ENCODE measurements at regions of chr13 and their contacts with region 1.

Region 1: DNA sequence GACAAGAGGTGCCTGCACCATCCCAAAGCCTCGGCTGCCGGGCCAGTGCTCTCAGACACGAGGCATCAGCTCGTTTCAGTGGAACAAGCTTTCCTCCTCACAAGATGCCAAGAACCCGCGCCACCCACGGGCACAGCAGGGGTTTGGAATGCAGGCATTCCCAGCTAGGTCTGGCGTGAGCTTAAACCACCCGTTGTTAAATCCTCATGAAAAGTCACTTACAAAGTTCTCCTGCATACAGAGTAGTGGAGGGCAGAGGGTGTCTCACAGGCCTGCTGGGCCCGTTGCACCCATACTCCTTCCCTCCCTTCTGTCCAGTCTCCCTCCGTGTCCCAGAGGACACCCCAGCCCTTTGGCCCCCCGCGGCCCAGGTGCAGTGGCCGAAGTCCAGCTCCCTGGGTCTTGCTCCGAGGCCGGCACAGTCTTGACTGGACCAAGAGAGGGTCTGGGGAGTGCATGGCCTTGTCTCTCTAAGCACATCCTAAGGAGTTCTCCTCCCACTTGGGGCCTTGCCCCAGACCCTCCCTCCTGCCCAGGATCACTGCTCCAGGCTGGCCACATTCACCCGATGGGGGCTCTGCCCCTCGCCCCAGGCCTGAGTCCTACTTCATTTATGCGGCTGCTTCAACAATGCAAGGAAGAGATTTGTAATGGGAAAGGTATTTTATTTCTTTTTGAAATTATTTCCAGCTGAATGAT is 35.2 kb upstream of the GRTP1 start:
- DNase-seq: peak in 1 of 2 donors; percentile 84
- ATAC-seq: no peak
- H3K4me3 ChIP-seq: no peak overlapping the region
- H3K27ac ChIP-seq: peak overlapping the region in 1 of 2 donors; percentile 6
- H3K4me1 ChIP-seq: no peaks in the 10 kb centered on the region
- H3K27me3 ChIP-seq: no peaks in the 10 kb centered on the region

Region 2: GRCh38 chr13:113296842-113297369 is 102.2 kb before region 1 on chr13 and contains the start of gene LAMP1:
- intact Hi-C with region 1: loop called (anchors 5 kb)
- DNase-seq: peak; percentile 98 to 99
- ATAC-seq: peak; percentile 97
- H3K4me3 ChIP-seq: peak within 1 kb of the TSS; percentile 54 to 81
- H3K27ac ChIP-seq: peak within 1 kb of the TSS; percentile 66 to 81
- H3K4me1 ChIP-seq: no peaks in the 10 kb centered on the region
- H3K27me3 ChIP-seq: no peaks in the 10 kb centered on the region
- total RNA-seq, gene LAMP1: 185 to 210 TPM

Region 3: GRCh38 chr13:113545455-113545930 is 146.4 kb after region 1 on chr13:
- intact Hi-C with region 1: no loop called
- DNase-seq: peak in 1 of 2 donors; percentile 55
- ATAC-seq: no peak
- H3K4me3 ChIP-seq: no peak overlapping the region
- H3K27ac ChIP-seq: no peak overlapping the region
- H3K4me1 ChIP-seq: no peaks in the 10 kb centered on the region
- H3K27me3 ChIP-seq: no peaks in the 10 kb centered on the region

Measured in aorta (tissue), 5 donors.